ENCODE measurements at regions of chr10 and their contacts with region 1.

Region 1: DNA sequence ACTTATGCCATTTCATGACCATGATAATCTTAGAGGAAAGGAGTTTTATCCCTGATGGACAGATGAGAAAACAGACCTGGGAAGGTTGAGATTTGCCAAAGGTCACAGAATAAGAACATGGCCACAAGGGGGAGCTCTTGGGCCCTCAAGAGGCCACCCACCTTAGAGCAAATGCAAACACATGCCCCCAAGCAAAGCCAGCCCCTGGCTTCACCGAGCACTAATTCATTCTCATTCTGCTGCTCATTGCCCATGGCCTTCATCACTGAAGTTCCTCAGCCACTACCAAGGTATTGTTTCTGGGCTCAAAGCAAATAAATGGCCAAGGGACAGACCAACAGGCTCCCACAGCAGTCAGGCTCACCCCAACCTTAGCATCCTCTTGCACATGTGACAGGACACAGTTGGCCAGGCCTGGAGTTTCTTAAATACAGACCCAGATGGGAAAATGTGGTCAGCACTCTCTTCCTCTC is 44.2 kb downstream of the PDLIM1 start:
- DNase-seq: peak; percentile 88
- ATAC-seq: peak; percentile 75
- H3K4me3 Mint-ChIP-seq: no peak overlapping the region
- H3K27ac Mint-ChIP-seq: no peak overlapping the region
- H3K4me1 Mint-ChIP-seq: peaks cover 4% of the 10 kb centered on the region
- H3K27me3 Mint-ChIP-seq: peaks cover 9% of the 10 kb centered on the region
- CTCF ChIP-seq: peak; percentile 80

Region 2: DNA sequence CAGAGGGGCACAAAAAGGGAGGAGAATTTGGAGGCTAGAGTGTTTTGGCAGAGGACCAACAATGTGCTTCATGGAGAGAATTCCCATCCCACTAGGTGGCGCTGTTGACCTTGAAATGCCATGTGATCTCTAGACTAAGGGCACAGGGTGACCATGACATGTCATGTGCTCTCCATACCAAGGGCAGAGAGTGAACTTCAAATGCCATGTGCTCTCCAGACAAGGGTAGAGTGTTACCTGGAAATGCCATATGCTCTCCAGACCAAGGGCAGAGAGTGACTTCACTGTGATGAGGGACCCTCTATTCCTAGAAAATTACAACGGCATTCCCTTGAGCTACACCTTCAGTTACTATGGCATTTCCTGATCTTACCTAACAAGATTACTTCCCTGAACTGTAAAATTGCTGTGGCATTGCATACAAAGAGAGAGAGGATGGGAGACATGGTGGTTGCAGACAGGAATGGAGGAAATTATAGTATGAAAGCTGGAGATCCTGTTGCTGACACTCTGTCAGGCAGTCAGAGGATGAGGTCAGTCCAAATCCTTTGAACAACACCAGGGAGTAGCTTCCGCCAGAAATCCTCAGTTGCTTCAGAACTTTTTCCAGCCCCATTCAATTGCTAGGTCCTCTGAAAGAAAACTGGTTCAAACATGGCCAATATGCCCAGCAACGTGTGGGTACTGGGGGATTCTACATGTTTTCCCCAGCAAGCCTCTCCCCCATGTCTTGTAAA is 113.4 kb before region 1 on chr10:
- CTCF ChIA-PET with region 1: interaction called, 66 read pairs
- POLR2A ChIA-PET with region 1: interaction called, 3 read pairs
- intact Hi-C with region 1: loop called (anchors 5 kb)
- DNase-seq: peak; percentile 90
- ATAC-seq: peak; percentile 79
- H3K4me3 Mint-ChIP-seq: no peak overlapping the region
- H3K27ac Mint-ChIP-seq: no peak overlapping the region
- H3K4me1 Mint-ChIP-seq: no peaks in the 10 kb centered on the region
- H3K27me3 Mint-ChIP-seq: no peaks in the 10 kb centered on the region
- CTCF ChIP-seq: peak; percentile 68

Region 3: GRCh38 chr10:95208702-95209391 is 37.8 kb before region 1 on chr10:
- CTCF ChIA-PET with region 1: interaction called, 18 read pairs
- POLR2A ChIA-PET with region 1: no interaction called
- intact Hi-C with region 1: no loop called
- DNase-seq: no peak
- ATAC-seq: no peak
- H3K4me3 Mint-ChIP-seq: no peak overlapping the region
- H3K27ac Mint-ChIP-seq: no peak overlapping the region
- H3K4me1 Mint-ChIP-seq: no peaks in the 10 kb centered on the region
- H3K27me3 Mint-ChIP-seq: no peaks in the 10 kb centered on the region
- CTCF ChIP-seq: peak; percentile 23

Region 4: DNA sequence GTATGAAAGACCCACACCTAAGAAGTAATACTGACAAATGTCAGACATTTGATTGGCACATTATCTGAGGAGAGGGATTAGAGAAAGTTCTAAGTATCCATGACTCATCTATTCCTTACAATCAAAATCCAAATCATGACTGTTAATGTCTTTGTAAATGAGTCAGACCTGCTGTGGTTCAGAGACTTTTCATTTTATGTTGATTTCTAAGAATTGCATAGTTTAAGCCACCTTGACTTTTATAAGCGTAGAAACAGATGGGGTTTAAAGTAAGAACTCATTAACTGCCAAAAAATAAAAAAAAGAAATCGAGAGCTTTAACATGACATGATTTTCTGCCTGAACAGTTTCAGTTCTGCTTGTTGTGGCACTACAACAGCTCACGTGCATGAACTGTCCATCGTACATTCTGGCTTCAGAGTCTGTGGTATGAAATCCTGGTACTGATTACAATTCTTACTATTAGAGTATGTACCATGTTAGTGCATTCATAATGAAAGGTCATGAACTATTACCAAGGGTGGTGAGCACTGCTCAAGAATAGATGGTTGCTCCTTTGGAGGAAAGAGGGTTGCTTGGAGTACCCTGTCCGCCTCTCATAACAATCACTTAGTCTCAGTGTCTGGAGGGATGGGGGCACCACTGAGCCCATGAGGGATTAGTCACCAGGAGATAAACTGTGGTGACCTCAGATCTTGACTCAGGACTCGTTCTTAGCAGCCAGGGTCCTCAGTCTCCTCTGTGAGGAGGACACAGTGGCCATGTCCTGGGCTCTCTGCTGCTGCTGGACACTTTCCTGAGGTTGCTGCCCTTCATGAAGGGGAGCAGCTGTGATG is 10.3 kb before region 1 on chr10:
- CTCF ChIA-PET with region 1: interaction called, 14 read pairs
- POLR2A ChIA-PET with region 1: interaction called, 3 read pairs
- intact Hi-C with region 1: no loop called
- DNase-seq: peak; percentile 55
- ATAC-seq: peak; percentile 88
- H3K4me3 Mint-ChIP-seq: peak overlapping the region; percentile 17
- H3K27ac Mint-ChIP-seq: peak overlapping the region; percentile 83
- H3K4me1 Mint-ChIP-seq: peaks cover 24% of the 10 kb centered on the region
- H3K27me3 Mint-ChIP-seq: peaks cover 6% of the 10 kb centered on the region
- CTCF ChIP-seq: no peak

Region 5: DNA sequence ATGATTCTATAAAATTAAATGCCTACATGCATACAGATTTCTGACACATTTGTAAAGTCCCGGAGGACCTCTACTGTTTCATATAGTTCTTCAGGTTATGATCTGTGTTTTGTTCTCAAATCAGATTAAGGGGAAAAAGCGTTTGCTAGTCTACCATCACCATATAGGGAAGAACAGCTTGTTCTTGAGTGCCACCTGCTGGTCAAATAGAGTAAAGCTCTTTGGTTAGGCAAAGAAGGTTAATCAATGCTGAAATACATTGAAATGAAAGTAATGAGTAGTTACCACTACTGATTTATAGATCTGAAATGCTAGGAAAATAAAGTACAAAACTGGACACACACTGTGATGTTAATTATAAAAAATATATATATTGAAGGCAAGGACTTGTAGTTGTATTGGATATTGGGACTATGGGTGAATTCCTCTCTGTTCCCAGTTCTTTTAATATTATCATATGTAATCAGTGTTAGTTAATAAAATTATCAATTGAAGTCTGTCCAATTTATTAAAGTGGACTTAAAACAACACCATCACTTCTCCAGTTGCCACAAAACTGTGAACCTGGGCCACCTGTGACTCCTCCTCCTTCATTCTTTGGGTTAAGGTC is 116.8 kb after region 1 on chr10:
- CTCF ChIA-PET with region 1: interaction called, 244 read pairs
- POLR2A ChIA-PET with region 1: interaction called, 8 read pairs
- intact Hi-C with region 1: loop called (anchors 2 kb)
- DNase-seq: peak; percentile 57
- ATAC-seq: peak; percentile 80
- H3K4me3 Mint-ChIP-seq: no peak overlapping the region
- H3K27ac Mint-ChIP-seq: no peak overlapping the region
- H3K4me1 Mint-ChIP-seq: no peaks in the 10 kb centered on the region
- H3K27me3 Mint-ChIP-seq: peaks cover 6% of the 10 kb centered on the region
- CTCF ChIP-seq: peak; percentile 91

Region 6: GRCh38 chr10:95391581-95392216 is 145.1 kb after region 1 on chr10:
- CTCF ChIA-PET with region 1: no interaction called
- POLR2A ChIA-PET with region 1: no interaction called
- intact Hi-C with region 1: no loop called
- DNase-seq: peak; percentile 9
- ATAC-seq: no peak
- H3K4me3 Mint-ChIP-seq: no peak overlapping the region
- H3K27ac Mint-ChIP-seq: no peak overlapping the region
- H3K4me1 Mint-ChIP-seq: peaks cover 8% of the 10 kb centered on the region
- H3K27me3 Mint-ChIP-seq: peaks cover 2% of the 10 kb centered on the region
- CTCF ChIP-seq: no peak